PC-3 (cell line): ENCODE measurements at regions of chr6 and their contacts with region 1.

Region 1: DNA sequence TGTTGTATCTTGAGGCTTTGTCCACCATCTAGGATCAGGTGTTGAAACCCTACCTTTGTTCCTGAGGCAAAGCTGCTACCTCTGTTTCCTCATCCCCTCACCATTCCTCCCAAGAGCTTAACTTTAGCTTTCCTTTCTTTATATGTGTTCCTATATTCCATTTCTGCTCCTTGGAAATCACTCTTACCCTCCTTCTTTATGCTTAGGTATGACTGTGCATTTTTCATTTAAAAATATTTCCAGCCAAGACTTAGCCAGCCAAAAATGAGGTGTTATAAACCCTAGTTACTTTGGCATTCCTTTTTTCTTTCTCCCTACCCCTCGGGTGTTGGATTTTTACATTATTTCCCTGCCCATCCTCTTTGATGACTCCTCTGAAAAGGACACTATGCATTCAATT is 57.7 kb downstream of the TSBP1 start:
- DNase-seq: no peak
- ATAC-seq: no peak
- H3K4me3 ChIP-seq: no peak overlapping the region
- H3K27ac ChIP-seq: no peak overlapping the region
- H3K4me1 ChIP-seq: no peaks in the 10 kb centered on the region
- H3K27me3 ChIP-seq: no peaks in the 10 kb centered on the region
- CTCF ChIP-seq: no peak

Region 2: DNA sequence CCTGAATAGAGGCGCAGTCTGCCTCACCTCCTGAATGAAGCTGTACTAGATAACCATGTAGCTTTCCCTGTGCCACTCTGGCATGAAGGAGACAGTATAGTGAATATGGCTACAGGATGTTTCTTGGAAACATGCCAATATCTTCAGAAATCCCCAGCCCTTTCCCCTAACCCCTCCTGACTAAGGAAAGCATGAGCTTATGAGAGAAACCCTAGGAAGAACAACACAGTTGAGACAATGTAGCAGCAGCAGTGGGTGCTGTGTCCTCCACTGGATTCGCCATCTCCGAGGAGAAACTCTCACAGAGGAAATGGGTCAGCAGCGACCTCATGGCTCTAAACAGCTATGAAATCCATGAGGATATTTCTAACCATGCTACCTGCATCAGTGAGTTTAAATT is 329.9 kb after region 1 on chr6:
- CTCF ChIA-PET with region 1: no interaction called
- POLR2A ChIA-PET with region 1: no interaction called
- intact Hi-C with region 1: no loop called
- DNase-seq: no peak
- ATAC-seq: no peak
- H3K4me3 ChIP-seq: no peak overlapping the region
- H3K27ac ChIP-seq: no peak overlapping the region
- H3K4me1 ChIP-seq: no peaks in the 10 kb centered on the region
- H3K27me3 ChIP-seq: peaks cover 19% of the 10 kb centered on the region; the same call in 1 of the 2 replicates
- CTCF ChIP-seq: no peak

Region 3: GRCh38 chr6:32853541-32854375 is 539.8 kb after region 1 on chr6 and contains the starts of genes PSMB9 and TAP1:
- CTCF ChIA-PET with region 1: interaction called, 10 read pairs
- POLR2A ChIA-PET with region 1: no interaction called
- intact Hi-C with region 1: no loop called
- DNase-seq: peak; percentile 95
- ATAC-seq: peak; percentile 87
- H3K4me3 ChIP-seq: peak within 1 kb of the TSS; percentile 83
- H3K27ac ChIP-seq: peak within 1 kb of the TSS; percentile 72
- H3K4me1 ChIP-seq: peaks cover 7% of the 10 kb centered on the region
- H3K27me3 ChIP-seq: no peaks in the 10 kb centered on the region
- CTCF ChIP-seq: peak; percentile 75
- total RNA-seq, gene PSMB9: 0.40 and 1.5 TPM in 2 replicates
- total RNA-seq, gene TAP1: 15.8 and 19.4 TPM in 2 replicates